ENCODE measurements at regions of chr22 and their contacts with region 1.

Region 1: GRCh38 chr22:23849009-23850006 is 8.4 kb upstream of the SLC2A11 start:
- DNase-seq: peak; percentile 92
- H3K4me3 ChIP-seq: peak overlapping the region; percentile 19 to 43; a peak in 2 of 4 replicates
- H3K27ac ChIP-seq: no peak overlapping the region
- H3K4me1 ChIP-seq: peaks cover 4 to 36% of the 10 kb centered on the region in 2 experiments
- H3K27me3 ChIP-seq: no peaks in the 10 kb centered on the region
- CTCF ChIP-seq: peak; percentile 87
- EP300 ChIP-seq: no peak
- RAD21 ChIP-seq: peak; percentile 95

Region 2: DNA sequence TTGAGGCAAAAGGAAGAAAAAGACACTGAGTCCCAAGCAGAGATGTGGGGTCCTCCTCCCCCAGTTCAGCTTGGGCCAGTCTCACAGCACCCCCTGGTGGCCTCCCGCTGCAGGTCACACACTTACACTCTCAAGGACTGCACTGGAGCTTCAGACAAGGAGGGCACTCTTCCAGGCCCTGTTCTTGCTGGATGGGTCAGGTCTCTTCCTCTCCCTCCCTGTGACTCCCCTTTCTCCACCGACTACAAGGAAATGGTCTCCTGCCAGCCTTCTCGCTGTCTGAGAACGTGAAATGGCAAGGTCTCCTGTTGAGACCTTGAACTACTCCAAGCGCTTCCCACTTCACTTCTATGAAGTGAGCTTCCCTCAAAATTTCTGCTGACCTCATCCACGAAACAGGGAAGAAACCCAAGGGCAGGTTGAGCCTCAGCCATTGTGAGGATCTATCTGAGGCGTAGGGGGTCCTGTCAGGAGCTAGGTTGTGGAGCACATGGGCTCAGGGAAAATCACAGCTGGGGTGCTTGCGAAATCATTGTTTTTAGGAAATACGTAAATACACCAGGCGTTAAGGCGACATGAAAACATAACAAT is 258.0 kb before region 1 on chr22:
- CTCF ChIA-PET with region 1: interaction called, 14 read pairs
- POLR2A ChIA-PET with region 1: no interaction called
- DNase-seq: peak; percentile 84
- H3K4me3 ChIP-seq: peak overlapping the region in 1 of 2 experiments; percentile 29; a peak in 1 of 4 replicates
- H3K27ac ChIP-seq: no peak overlapping the region
- H3K4me1 ChIP-seq: no peaks in the 10 kb centered on the region
- H3K27me3 ChIP-seq: no peaks in the 10 kb centered on the region
- CTCF ChIP-seq: peak; percentile 90
- EP300 ChIP-seq: no peak
- RAD21 ChIP-seq: peak; percentile 94

Region 3: DNA sequence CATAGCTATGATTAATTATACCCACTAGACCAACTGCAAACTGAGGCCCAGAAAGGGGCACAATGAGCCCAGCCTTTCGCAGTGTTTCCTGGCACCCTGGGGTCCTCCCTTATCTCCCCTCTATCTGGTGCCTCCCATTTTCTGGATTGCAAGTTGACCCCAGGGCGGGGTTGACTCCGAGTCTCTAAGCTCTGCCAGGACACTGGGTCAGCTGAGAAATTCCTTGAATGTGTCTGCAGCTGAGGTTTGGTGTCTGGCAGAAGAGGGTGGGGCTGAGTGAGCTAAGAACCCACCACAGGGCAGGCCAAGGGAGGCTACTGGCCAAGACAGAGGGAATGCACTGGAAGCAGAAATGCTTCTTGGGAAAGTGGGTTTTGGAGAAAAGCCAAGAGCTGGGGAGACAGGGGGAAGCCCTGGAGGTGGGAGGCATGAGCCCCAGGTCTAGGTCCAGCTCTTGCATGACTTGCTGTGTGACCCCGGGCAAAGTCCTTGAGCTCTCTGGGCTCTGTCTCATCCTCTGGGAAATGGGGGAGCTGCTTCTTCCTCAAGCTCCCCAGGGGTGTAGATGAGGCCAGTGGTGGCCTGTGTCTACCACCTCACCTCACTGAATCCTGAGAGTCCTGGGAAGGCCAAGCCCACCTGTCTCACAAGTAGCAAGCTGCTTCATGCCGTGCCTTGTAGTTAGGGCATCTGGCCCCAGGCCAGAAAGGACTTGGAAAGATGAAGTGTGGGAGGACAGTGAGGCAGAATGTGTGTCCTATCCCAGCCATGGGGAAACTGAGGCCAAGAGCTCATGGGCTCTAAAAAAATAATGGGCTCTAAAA is 74.4 kb before region 1 on chr22:
- CTCF ChIA-PET with region 1: interaction called, 277 read pairs
- POLR2A ChIA-PET with region 1: interaction called, 5 read pairs
- DNase-seq: no peak
- H3K4me3 ChIP-seq: no peak overlapping the region
- H3K27ac ChIP-seq: no peak overlapping the region
- H3K4me1 ChIP-seq: peaks cover 4 to 34% of the 10 kb centered on the region in 2 experiments; a peak in 2 of 4 replicates
- H3K27me3 ChIP-seq: no peaks in the 10 kb centered on the region
- CTCF ChIP-seq: no peak
- EP300 ChIP-seq: no peak
- RAD21 ChIP-seq: no peak

Region 4: DNA sequence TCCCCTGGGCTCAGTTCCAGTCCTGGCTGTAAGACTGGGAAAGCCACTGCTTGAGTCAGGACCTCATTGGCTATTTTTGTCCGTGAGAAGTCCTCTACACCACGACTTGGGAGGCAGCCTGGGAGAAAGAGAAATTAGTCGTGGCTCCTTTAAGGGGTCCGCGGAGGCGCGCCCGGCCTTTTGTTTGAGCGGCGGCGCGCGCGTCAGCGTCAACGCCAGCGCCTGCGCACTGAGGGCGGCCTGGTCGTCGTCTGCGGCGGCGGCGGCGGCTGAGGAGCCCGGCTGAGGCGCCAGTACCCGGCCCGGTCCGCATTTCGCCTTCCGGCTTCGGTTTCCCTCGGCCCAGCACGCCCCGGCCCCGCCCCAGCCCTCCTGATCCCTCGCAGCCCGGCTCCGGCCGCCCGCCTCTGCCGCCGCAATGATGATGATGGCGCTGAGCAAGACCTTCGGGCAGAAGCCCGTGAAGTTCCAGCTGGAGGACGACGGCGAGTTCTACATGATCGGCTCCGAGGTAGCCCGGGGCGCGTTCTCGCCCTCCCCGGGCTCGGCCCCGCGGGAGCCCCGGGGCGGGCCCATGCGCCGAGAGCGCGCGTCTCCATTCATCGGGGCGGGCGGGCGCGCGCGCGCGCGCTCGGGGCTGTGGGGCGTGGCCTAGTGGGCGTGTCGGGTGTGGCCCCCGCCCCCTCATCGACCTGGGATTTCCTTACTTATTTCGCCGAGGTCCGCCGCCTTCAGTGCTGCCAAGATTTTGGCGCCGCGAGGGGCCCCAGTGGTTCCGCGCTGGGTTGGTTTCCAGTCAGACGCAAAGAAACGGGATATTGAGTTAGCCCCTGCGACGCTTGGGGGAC is 62.3 kb before region 1 on chr22 and contains the start of gene SMARCB1:
- CTCF ChIA-PET with region 1: interaction called, 36 read pairs
- POLR2A ChIA-PET with region 1: interaction called, 3 read pairs
- DNase-seq: peak; percentile 98
- H3K4me3 ChIP-seq: peak within 1 kb of the TSS; percentile 84 to 92
- H3K27ac ChIP-seq: peak within 1 kb of the TSS; percentile 97 to 98
- H3K4me1 ChIP-seq: peaks cover 0 to 43% of the 10 kb centered on the region in 2 experiments; a peak in 2 of 4 replicates
- H3K27me3 ChIP-seq: no peaks in the 10 kb centered on the region
- CTCF ChIP-seq: no peak
- EP300 ChIP-seq: no peak; a peak in 1 of 4 replicates
- RAD21 ChIP-seq: no peak
- polyA plus RNA-seq, gene SMARCB1: 182 and 215 TPM in 2 replicates

Region 5: GRCh38 chr22:23826465-23827199 is 22.7 kb before region 1 on chr22:
- CTCF ChIA-PET with region 1: interaction called, 17 read pairs
- POLR2A ChIA-PET with region 1: interaction called, 13 read pairs
- DNase-seq: peak; percentile 86
- H3K4me3 ChIP-seq: no peak overlapping the region
- H3K27ac ChIP-seq: peak overlapping the region; percentile 76 to 95
- H3K4me1 ChIP-seq: peaks cover 0 to 69% of the 10 kb centered on the region in 2 experiments; a peak in 2 of 4 replicates
- H3K27me3 ChIP-seq: no peaks in the 10 kb centered on the region
- CTCF ChIP-seq: no peak
- EP300 ChIP-seq: peak in 1 of 2 experiments; percentile 76; a peak in 1 of 4 replicates
- RAD21 ChIP-seq: no peak; the same call in none of the 2 replicates

Region 6: DNA sequence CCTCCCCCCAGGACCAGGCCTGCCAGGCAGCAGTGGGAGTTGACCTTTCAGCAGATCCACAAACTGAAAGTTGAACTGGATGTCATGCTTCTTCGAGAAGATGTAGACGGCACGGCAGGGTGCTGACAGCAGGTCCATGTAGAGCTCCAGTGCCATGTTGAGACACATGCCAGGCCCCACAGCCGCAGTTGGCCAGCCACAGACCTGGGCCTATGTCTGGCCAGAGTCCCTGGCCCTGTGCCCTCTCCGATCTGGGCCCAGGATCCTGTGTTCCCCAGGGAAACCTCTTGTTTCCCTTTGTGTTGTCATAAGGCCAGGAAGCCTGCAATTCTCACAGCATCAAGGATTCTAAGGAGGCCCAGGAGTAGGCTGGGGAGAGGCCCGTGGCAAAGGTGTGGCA is 155.9 kb after region 1 on chr22 and contains the start of gene GSTT4:
- CTCF ChIA-PET with region 1: no interaction called
- POLR2A ChIA-PET with region 1: no interaction called
- DNase-seq: no peak
- H3K4me3 ChIP-seq: no peak within 1 kb of the TSS
- H3K27ac ChIP-seq: no peak within 1 kb of the TSS
- H3K4me1 ChIP-seq: peaks cover 0 to 5% of the 10 kb centered on the region in 2 experiments; a peak in 1 of 4 replicates
- H3K27me3 ChIP-seq: no peaks in the 10 kb centered on the region
- CTCF ChIP-seq: no peak
- EP300 ChIP-seq: no peak
- RAD21 ChIP-seq: no peak
- polyA plus RNA-seq, gene GSTT4: not detected in 2 replicates

Region 7: GRCh38 chr22:24128631-24129262 is 279.4 kb after region 1 on chr22:
- CTCF ChIA-PET with region 1: no interaction called
- POLR2A ChIA-PET with region 1: no interaction called
- DNase-seq: no peak
- H3K4me3 ChIP-seq: no peak overlapping the region
- H3K27ac ChIP-seq: no peak overlapping the region
- H3K4me1 ChIP-seq: no peaks in the 10 kb centered on the region
- H3K27me3 ChIP-seq: no peaks in the 10 kb centered on the region
- CTCF ChIP-seq: no peak
- EP300 ChIP-seq: no peak
- RAD21 ChIP-seq: 0 out of 2 replicates have a peak, but pooled peaks have one; percentile 8

Measured in SK-N-SH (cell line).